PC-9 (cell line): ENCODE measurements at regions of chr2 and their contacts with region 1.

Region 1: GRCh38 chr2:9630749-9631483 is at the start of gene YWHAQ:
- DNase-seq: peak; percentile 93 to 98
- H3K4me3 ChIP-seq: peak within 1 kb of the TSS; percentile 91
- H3K27ac ChIP-seq: peak within 1 kb of the TSS; percentile 72
- H3K4me1 ChIP-seq: peaks cover 36% of the 10 kb centered on the region
- H3K27me3 ChIP-seq: no peaks in the 10 kb centered on the region
- CTCF ChIP-seq: no peak
- total RNA-seq, gene YWHAQ: 353 and 373 TPM in 2 replicates

Region 2: DNA sequence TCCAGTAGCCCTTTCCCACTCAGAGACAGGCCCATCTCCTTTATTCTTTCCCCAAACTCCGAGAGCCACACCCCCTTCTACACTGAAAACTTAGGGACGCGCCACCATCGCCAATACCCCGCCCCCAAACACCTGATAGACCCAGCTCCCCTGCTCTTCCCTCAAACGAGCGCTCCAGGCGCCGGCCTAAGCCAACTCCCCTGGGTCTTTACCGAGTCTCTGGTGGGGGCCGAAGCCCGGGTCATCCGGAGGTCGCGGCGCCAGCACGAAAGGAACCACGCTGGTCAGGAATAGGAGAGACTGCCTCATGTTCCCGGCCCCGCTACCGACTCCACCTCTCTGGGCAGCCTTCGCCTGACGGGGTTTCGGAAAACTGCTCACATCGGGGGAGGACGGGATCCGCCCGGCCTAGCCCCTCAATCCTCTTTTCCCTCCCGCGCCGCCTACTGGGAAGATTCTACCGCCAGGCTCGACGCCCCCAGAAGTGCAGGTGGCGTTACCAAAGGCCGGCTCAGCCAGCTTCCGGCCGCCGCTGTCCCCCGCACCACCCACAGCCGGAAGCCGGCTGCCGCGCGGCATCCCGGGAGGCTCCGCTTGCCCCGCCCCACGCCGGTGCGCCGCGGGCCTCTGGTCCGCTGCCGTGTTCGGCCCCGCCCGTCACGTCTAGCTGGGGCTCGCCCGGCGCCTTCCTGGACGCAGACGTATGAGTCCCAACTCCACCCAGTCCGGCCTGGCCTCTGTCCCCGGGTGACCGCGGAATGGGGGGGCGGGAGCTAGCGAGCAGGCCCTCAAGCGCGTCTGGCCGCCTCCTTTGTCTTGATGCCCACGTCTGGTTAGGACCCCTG is 75.4 kb before region 1 on chr2 and contains the start of gene ADAM17:
- CTCF ChIA-PET with region 1: interaction called, 3 read pairs
- POLR2A ChIA-PET with region 1: interaction called, 8 read pairs
- intact Hi-C with region 1: loop called (anchors 2 kb)
- DNase-seq: peak; percentile 90 to 96
- H3K4me3 ChIP-seq: peak within 1 kb of the TSS; percentile 83
- H3K27ac ChIP-seq: peak within 1 kb of the TSS; percentile 96
- H3K4me1 ChIP-seq: peaks cover 74% of the 10 kb centered on the region
- H3K27me3 ChIP-seq: no peaks in the 10 kb centered on the region
- CTCF ChIP-seq: peak; percentile 35; the same call in 1 of the 2 replicates
- total RNA-seq, gene ADAM17: 53.5 and 65.0 TPM in 2 replicates

Region 3: GRCh38 chr2:10057231-10058107 is 426.6 kb after region 1 on chr2:
- CTCF ChIA-PET with region 1: no interaction called
- POLR2A ChIA-PET with region 1: no interaction called
- intact Hi-C with region 1: loop called (anchors 10 kb)
- DNase-seq: peak; percentile 63 to 76
- H3K4me3 ChIP-seq: peak overlapping the region; percentile 50; the same call in 1 of the 2 replicates
- H3K27ac ChIP-seq: no peak overlapping the region
- H3K4me1 ChIP-seq: peaks cover 10% of the 10 kb centered on the region; the same call in 1 of the 2 replicates
- H3K27me3 ChIP-seq: no peaks in the 10 kb centered on the region
- CTCF ChIP-seq: no peak